ENCODE measurements at regions of chr5 and their contacts with region 1.

Region 1: GRCh38 chr5:110195288-110195687 is 505.6 kb downstream of the MAN2A1 start:
- DNase-seq: no peak
- ATAC-seq: no peak
- H3K4me3 ChIP-seq: no peak overlapping the region
- H3K27ac ChIP-seq: no peak overlapping the region
- H3K4me1 ChIP-seq: no peaks in the 10 kb centered on the region
- H3K27me3 ChIP-seq: no peaks in the 10 kb centered on the region
- CTCF ChIP-seq: no peak
- EP300 ChIP-seq: no peak
- POLR2A ChIP-seq: no peak
- RAD21 ChIP-seq: no peak

Region 2: DNA sequence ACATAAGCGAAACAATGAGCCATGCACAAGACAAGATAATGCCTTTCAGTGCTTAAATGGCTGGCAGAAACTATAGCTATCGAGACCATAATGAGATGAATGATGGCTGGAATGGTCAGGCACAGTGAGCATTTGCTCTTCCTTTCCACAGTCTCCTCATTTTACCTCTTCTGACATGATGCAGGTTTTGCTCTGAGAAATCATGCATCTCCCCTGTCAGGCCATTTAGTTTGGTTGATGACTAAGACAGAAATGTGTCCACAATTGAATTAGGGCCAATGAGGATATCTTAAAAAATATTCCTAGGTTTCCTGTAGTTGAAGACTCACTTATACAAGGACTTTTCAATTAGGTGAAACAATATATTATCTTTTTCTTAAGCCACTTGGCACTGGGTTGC is 56.1 kb after region 1 on chr5:
- CTCF ChIA-PET with region 1: no interaction called
- POLR2A ChIA-PET with region 1: no interaction called
- in situ Hi-C with region 1: no loop called
- intact Hi-C with region 1: no loop called
- DNase-seq: no peak
- ATAC-seq: no peak
- H3K4me3 ChIP-seq: no peak overlapping the region
- H3K27ac ChIP-seq: no peak overlapping the region
- H3K4me1 ChIP-seq: no peaks in the 10 kb centered on the region
- H3K27me3 ChIP-seq: no peaks in the 10 kb centered on the region
- CTCF ChIP-seq: no peak
- EP300 ChIP-seq: no peak
- POLR2A ChIP-seq: no peak
- RAD21 ChIP-seq: no peak

Region 3: DNA sequence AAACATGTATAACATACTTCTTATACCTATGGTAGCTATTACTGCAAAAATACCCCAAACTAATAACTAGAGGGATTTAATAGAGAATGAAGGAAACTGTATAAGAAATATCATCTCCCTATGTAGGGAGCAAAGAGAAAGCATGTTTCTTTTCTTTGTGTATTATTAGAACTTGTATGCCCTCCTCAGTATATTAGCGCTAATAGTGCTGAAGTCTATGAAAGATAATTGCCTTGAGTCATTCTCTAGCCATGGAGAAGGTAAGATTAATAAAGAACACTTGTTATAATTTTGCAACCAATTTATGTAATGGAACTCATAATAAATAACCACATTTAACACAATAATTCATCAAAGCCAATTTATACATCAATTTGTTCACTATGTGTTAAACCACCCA is 202.0 kb after region 1 on chr5:
- CTCF ChIA-PET with region 1: no interaction called
- POLR2A ChIA-PET with region 1: no interaction called
- in situ Hi-C with region 1: loop called (anchors 10 kb)
- intact Hi-C with region 1: no loop called
- DNase-seq: no peak
- ATAC-seq: no peak
- H3K4me3 ChIP-seq: no peak overlapping the region
- H3K27ac ChIP-seq: no peak overlapping the region
- H3K4me1 ChIP-seq: no peaks in the 10 kb centered on the region
- H3K27me3 ChIP-seq: no peaks in the 10 kb centered on the region
- CTCF ChIP-seq: no peak
- EP300 ChIP-seq: no peak
- POLR2A ChIP-seq: no peak
- RAD21 ChIP-seq: no peak

Region 4: GRCh38 chr5:111278845-111279504 is 1083.7 kb after region 1 on chr5:
- CTCF ChIA-PET with region 1: no interaction called
- POLR2A ChIA-PET with region 1: no interaction called
- in situ Hi-C with region 1: no loop called
- intact Hi-C with region 1: loop called (anchors 10 kb)
- DNase-seq: peak; percentile 70 to 74 (median 72)
- ATAC-seq: peak; percentile 99
- H3K4me3 ChIP-seq: no peak overlapping the region
- H3K27ac ChIP-seq: no peak overlapping the region
- H3K4me1 ChIP-seq: no peaks in the 10 kb centered on the region
- H3K27me3 ChIP-seq: no peaks in the 10 kb centered on the region
- CTCF ChIP-seq: peak; percentile 75 to 81 (median 76)
- EP300 ChIP-seq: no peak
- POLR2A ChIP-seq: no peak
- RAD21 ChIP-seq: peak; percentile 67 to 79